Head of caudate nucleus (tissue), 42 donors: ENCODE measurements at regions of chr20 and their contacts with region 1.

Region 1: GRCh38 chr20:49979030-49979832 is 3.5 kb upstream of the SNAI1 start:
- DNase-seq: peak in 39 of 42 donors; percentile 16 to 85 (median 68)

Region 2: GRCh38 chr20:49880177-49880576 is 99.1 kb before region 1 on chr20:
- intact Hi-C with region 1: no loop called
- DNase-seq: peak in 2 of 42 donors; percentile 23 to 29

Region 3: GRCh38 chr20:50048420-50049166 is 69.4 kb after region 1 on chr20:
- intact Hi-C with region 1: no loop called
- DNase-seq: peak in 30 of 42 donors; percentile 10 to 69 (median 36)

Region 4: DNA sequence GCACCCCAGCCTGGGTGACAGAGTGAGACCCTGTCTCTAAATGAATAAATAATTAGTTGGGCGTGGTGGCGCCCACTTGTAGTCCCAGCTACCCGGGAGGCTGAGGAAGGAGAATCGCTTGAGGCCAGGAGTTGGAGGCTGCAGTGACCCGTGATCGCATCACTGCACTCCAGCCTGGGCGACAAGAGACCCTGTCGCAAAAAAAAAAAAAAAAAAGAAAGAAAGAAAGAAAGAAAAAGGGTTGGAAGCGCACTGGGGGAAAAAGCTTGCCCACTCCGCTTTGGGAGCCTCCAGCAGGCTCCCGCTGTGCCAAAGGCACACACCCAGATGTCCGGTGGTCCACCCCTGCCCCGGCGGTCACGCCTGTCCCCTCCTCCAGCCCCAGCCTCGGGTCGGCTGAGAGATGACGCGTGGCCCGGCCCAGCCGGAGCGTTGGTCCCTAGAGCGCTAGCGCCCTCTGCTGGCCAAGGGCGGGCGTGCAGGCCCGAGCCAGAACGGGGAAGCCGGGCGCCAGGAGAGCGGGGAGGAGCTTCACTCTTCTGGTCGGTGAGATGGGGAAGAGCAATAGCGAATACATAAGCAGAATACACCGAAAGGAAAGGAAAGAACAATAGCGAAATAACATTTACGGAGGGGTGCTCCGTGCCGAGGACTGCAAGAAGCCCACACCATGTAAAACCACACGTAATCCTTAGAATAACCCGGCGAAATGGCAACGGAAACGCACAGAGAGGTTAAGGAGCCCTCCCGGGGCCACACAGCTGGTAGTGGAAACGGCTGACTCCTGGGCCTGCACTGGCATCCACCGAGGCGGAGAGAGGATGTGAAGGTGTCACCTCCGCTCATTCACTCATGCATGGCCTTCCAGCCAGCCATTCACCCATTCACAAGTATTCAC is 92.0 kb after region 1 on chr20:
- intact Hi-C with region 1: loop called (anchors 1 kb)
- DNase-seq: peak; percentile 75 to 98 (median 92)

Region 5: GRCh38 chr20:50095476-50096078 is 116.3 kb after region 1 on chr20:
- intact Hi-C with region 1: no loop called
- DNase-seq: no peak